A673 (cell line): ENCODE measurements at regions of chr5 and their contacts with region 1.

Region 1: GRCh38 chr5:101385276-101385675 is 482.2 kb upstream of the ST8SIA4 start:
- DNase-seq: no peak
- H3K4me3 ChIP-seq: no peak overlapping the region
- H3K27ac ChIP-seq: no peak overlapping the region
- H3K4me1 ChIP-seq: no peaks in the 10 kb centered on the region
- H3K27me3 ChIP-seq: no peaks in the 10 kb centered on the region
- CTCF ChIP-seq: no peak

Region 2: DNA sequence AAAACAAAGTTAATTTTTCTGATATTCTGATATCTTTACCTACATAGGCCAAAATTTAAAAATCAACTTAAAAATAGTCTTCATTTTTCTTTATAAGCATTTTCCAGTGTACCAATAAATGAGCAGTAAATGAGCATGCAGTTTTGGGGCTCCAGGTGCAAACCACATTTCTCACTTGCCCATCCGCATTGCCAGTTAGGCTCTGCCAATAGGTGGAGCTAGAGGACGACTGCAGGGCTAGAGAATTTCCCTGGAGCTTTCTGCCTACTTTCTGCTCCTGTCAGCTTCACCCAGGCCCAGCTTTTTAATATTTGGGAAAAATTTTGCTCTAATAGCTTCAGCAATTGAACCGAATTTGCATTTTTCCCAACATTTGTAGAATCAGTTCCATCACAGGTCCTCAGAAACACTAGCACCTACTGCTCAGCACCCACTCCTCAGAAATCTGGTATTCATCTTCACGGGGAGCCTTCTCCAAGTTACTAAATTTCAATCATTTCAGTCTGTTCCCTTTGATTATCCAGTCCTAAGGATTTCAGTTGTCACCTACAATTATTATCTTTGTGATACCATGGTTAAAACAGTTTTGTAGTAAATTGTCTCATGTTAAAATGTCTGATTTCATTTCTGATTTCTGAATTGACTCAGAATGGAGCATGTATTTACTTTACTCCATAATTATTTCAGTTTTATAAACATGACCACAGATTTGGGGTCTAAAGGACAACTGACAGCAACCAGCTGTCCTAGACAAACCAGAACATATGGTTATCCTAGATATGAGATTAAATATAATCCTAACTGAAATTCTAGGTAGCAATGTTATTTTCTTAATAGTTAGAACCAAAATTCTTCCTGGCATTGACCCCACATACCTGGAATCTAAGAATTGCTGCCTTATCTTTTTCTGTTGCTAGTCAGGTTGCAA is 954.7 kb before region 1 on chr5:
- CTCF ChIA-PET with region 1: interaction called, 3 read pairs
- POLR2A ChIA-PET with region 1: no interaction called
- intact Hi-C with region 1: loop called (anchors 10 kb)
- DNase-seq: peak; percentile 54
- H3K4me3 ChIP-seq: no peak overlapping the region
- H3K27ac ChIP-seq: no peak overlapping the region
- H3K4me1 ChIP-seq: no peaks in the 10 kb centered on the region
- H3K27me3 ChIP-seq: no peaks in the 10 kb centered on the region
- CTCF ChIP-seq: peak; percentile 83